MCF 10A (cell line): ENCODE measurements at regions of chr1 and their contacts with region 1.

Region 1: GRCh38 chr1:224528900-224529299 is 87.2 kb upstream of the CNIH3 start:
- DNase-seq: peak; percentile 76
- H3K4me3 Mint-ChIP-seq: no peak overlapping the region
- H3K27ac Mint-ChIP-seq: no peak overlapping the region
- H3K4me1 Mint-ChIP-seq: peaks cover 24% of the 10 kb centered on the region
- H3K27me3 Mint-ChIP-seq: no peaks in the 10 kb centered on the region
- CTCF ChIP-seq: no peak

Region 2: DNA sequence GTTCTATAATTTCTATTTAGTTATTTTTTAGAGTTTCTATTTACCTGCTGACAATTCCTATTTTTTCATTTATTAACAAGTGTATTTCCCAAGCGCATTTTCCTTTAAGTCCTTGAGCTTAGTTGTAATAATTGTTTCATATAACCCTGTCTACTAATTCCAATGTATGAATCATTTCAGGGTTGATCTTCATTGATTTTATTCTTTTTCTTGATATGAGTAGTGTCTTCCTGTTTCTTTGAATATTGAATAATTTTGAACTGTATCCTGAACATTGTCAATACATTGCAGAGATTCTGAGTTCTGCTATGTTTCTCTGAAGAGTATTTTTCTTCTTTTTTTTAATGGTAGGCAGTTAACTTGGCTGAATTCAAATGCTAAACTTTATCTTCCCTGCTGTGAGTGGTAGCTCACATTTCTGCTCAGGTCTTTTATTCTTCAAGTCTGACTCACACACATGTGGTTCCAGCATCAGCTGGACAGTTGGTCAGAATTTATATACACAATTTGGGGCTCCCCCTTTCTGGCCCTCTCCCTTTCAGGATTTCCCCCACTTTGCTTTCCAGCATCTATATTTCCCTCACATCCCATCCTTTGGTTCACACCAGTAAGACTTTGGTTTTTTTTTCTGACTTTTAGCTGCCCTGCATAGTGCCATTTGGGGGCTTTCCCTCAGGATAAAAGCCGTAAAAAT is 39.9 kb before region 1 on chr1:
- CTCF ChIA-PET with region 1: no interaction called
- POLR2A ChIA-PET with region 1: no interaction called
- intact Hi-C with region 1: no loop called
- DNase-seq: peak; percentile 56
- H3K4me3 Mint-ChIP-seq: no peak overlapping the region
- H3K27ac Mint-ChIP-seq: peak overlapping the region; percentile 61
- H3K4me1 Mint-ChIP-seq: peaks cover 28% of the 10 kb centered on the region
- H3K27me3 Mint-ChIP-seq: no peaks in the 10 kb centered on the region
- CTCF ChIP-seq: no peak

Region 3: GRCh38 chr1:224542783-224543440 is 14.0 kb after region 1 on chr1:
- CTCF ChIA-PET with region 1: interaction called, 6 read pairs
- POLR2A ChIA-PET with region 1: interaction called, 10 read pairs
- intact Hi-C with region 1: no loop called
- DNase-seq: peak; percentile 92
- H3K4me3 Mint-ChIP-seq: no peak overlapping the region
- H3K27ac Mint-ChIP-seq: peak overlapping the region; percentile 59
- H3K4me1 Mint-ChIP-seq: peaks cover 22% of the 10 kb centered on the region
- H3K27me3 Mint-ChIP-seq: no peaks in the 10 kb centered on the region
- CTCF ChIP-seq: no peak